BJ (cell line): ENCODE measurements at regions of chr10 and their contacts with region 1.

Region 1: GRCh38 chr10:3071405-3072198 is 4.3 kb downstream of the PFKP start:
- DNase-seq: no peak
- H3K4me3 ChIP-seq: no peak overlapping the region
- H3K27me3 ChIP-seq: no peaks in the 10 kb centered on the region
- CTCF ChIP-seq: no peak

Region 2: GRCh38 chr10:2949948-2950354 is 121.7 kb before region 1 on chr10:
- CTCF ChIA-PET with region 1: no interaction called
- POLR2A ChIA-PET with region 1: no interaction called
- DNase-seq: no peak
- H3K4me3 ChIP-seq: no peak overlapping the region
- H3K27me3 ChIP-seq: peaks cover 2% of the 10 kb centered on the region
- CTCF ChIP-seq: no peak

Region 3: GRCh38 chr10:2985729-2986232 is 85.8 kb before region 1 on chr10:
- CTCF ChIA-PET with region 1: no interaction called
- POLR2A ChIA-PET with region 1: no interaction called
- DNase-seq: no peak
- H3K4me3 ChIP-seq: no peak overlapping the region
- H3K27me3 ChIP-seq: peaks cover 8% of the 10 kb centered on the region; the same call in 1 of the 2 replicates
- CTCF ChIP-seq: no peak

Region 4: GRCh38 chr10:3095373-3096139 is 24.0 kb after region 1 on chr10:
- CTCF ChIA-PET with region 1: interaction called, 4 read pairs
- POLR2A ChIA-PET with region 1: interaction called, 14 read pairs
- DNase-seq: peak; percentile 98
- H3K4me3 ChIP-seq: no peak overlapping the region
- H3K27me3 ChIP-seq: no peaks in the 10 kb centered on the region
- CTCF ChIP-seq: no peak

Region 5: GRCh38 chr10:3281941-3282673 is 210.5 kb after region 1 on chr10:
- CTCF ChIA-PET with region 1: no interaction called
- POLR2A ChIA-PET with region 1: no interaction called
- DNase-seq: no peak
- H3K4me3 ChIP-seq: no peak overlapping the region
- H3K27me3 ChIP-seq: peaks cover 14% of the 10 kb centered on the region
- CTCF ChIP-seq: no peak

Region 6: DNA sequence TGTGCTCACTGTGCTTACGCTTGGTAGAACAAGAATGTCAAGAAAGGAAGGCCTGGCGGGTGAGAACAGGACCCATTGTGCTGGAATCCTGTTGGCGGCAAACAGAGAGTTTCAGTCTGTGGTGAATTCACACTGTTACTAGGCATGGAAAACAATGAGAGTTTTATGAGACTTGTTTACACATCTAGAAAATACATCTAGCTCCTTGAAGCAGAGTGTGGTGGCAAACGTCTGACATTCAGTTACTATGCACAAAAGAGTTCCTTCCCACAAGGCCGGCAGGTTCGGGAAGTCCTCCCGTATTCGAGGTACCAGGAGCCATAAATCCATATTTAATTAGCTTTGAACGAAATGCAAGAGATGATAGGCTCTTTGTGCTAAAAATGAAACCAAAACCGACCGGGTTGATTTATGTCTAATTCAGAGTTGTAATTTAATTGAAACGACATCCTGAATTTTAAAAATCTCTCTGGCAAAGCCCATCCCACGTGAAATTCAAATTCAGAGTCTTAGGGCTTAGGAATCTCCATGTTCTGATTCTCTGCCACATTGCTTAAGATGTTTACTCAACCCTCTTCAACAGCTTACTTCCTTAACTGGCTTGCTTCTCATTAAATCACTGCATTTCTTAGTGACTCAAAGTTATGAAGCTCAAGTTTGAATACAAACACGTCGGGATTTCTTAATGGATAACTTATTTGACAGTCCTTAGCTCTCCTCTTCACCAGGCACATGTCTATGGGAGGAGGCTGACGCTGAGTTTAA is 400.9 kb after region 1 on chr10:
- CTCF ChIA-PET with region 1: no interaction called
- POLR2A ChIA-PET with region 1: no interaction called
- DNase-seq: no peak
- H3K4me3 ChIP-seq: no peak overlapping the region
- H3K27me3 ChIP-seq: no peaks in the 10 kb centered on the region
- CTCF ChIP-seq: no peak